ENCODE measurements at regions of chr1 and their contacts with region 1.

Region 1: GRCh38 chr1:16946646-16947045 is 24.9 kb downstream of the CROCC start:
- DNase-seq: no peak
- H3K4me3 ChIP-seq: no peak overlapping the region
- H3K27ac ChIP-seq: no peak overlapping the region
- H3K4me1 ChIP-seq: no peaks in the 10 kb centered on the region
- H3K27me3 ChIP-seq: no peaks in the 10 kb centered on the region
- CTCF ChIP-seq: no peak
- POLR2A ChIP-seq: no peak

Region 2: DNA sequence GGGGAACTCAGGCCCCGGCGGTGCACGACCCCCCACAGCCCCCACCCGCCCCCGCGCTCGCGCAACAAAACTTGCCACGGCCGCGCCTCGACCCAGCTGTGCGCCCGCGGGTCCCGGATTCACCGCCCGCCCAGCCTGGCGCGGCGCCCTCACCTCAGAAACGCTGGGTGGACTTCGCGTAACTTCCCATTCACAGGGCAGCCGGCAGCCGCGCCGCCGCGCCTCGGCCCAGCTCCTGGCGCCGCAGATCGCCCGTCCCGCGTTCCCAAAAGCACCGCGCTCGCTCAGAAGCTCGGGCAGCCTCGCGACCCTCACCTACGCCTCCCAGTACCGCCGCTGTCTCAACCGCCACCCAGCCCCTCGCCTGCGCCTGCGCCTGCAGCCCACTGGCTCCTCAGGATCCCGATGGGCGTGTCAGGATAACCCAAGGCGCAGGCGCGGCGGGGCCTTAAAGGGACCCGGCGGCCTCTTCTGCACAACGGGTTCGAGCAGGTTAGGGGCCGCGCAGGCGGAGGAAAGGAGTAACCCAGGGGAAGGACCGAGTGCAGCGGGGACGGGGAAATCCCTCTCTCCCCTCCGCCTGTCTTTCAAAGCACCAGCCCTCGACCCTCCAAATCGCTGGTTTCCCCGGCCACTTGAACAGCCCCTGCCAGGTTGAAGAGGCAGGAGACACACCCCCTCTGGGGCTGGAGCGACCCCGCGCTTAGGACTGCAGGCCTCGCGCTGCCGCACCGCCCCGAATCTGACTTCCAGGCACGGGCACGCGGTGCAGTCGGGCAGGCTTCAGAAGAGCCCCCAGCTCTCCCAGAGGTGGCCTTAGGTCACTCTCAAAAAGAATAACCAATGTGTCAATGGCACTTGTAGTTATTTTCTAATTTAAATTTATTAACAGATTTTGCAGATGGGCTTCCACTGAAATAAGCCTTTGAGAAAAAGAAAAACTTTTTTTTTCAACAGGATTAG is 333.2 kb before region 1 on chr1 and contains the start of gene NBPF1:
- CTCF ChIA-PET with region 1: interaction called, 47 read pairs
- POLR2A ChIA-PET with region 1: interaction called, 6 read pairs
- dilution Hi-C with region 1: no loop called
- intact Hi-C with region 1: no loop called
- DNase-seq: peak; percentile 100
- H3K4me3 ChIP-seq: peak within 1 kb of the TSS; percentile 48 to 66 (median 53)
- H3K27ac ChIP-seq: no peak within 1 kb of the TSS
- H3K4me1 ChIP-seq: peaks cover 12% of the 10 kb centered on the region
- H3K27me3 ChIP-seq: no peaks in the 10 kb centered on the region
- CTCF ChIP-seq: peak in 1 of 2 donors; percentile 1
- POLR2A ChIP-seq: peak; percentile 99
- total RNA-seq, gene NBPF1: 33.5 and 58.4 TPM in 2 replicates

Region 3: GRCh38 chr1:16625497-16626408 is 320.9 kb before region 1 on chr1:
- CTCF ChIA-PET with region 1: interaction called, 69 read pairs
- POLR2A ChIA-PET with region 1: no interaction called
- dilution Hi-C with region 1: no loop called
- intact Hi-C with region 1: loop called (anchors 1 kb)
- DNase-seq: no peak
- H3K4me3 ChIP-seq: no peak overlapping the region
- H3K27ac ChIP-seq: no peak overlapping the region
- H3K4me1 ChIP-seq: no peaks in the 10 kb centered on the region
- H3K27me3 ChIP-seq: no peaks in the 10 kb centered on the region
- CTCF ChIP-seq: no peak
- POLR2A ChIP-seq: no peak

Region 4: DNA sequence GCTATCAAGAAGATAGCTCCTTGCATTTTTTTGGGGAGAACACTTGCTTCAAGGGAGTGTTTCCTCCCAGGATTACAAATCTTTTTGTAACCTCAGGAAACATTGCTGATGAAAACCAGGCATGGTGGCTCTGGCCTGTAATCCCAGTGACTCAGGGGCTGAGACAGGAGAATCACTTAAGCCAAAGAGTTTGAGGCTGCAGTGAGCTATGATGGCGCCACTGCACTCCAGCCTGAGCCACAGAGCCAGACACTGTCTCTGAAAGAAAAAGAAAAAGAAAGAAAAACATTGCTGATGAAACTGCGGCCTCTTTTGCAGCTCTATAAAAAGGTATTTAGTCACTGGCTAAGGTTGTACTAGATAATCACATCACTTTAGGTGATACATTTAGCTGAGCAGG is 43.6 kb before region 1 on chr1:
- CTCF ChIA-PET with region 1: no interaction called
- POLR2A ChIA-PET with region 1: no interaction called
- dilution Hi-C with region 1: no loop called
- intact Hi-C with region 1: no loop called
- DNase-seq: no peak
- H3K4me3 ChIP-seq: no peak overlapping the region
- H3K27ac ChIP-seq: no peak overlapping the region
- H3K4me1 ChIP-seq: peaks cover 19% of the 10 kb centered on the region
- H3K27me3 ChIP-seq: no peaks in the 10 kb centered on the region
- CTCF ChIP-seq: no peak
- POLR2A ChIP-seq: no peak

Region 5: GRCh38 chr1:17011439-17012307 is 65.0 kb after region 1 on chr1 and contains the start of gene ATP13A2:
- CTCF ChIA-PET with region 1: interaction called, 6 read pairs
- POLR2A ChIA-PET with region 1: interaction called, 5 read pairs
- dilution Hi-C with region 1: no loop called
- intact Hi-C with region 1: loop called (anchors 2 kb)
- DNase-seq: peak; percentile 75
- H3K4me3 ChIP-seq: peak within 1 kb of the TSS; percentile 20 to 62 (median 59)
- H3K27ac ChIP-seq: no peak within 1 kb of the TSS
- H3K4me1 ChIP-seq: peaks cover 24% of the 10 kb centered on the region
- H3K27me3 ChIP-seq: no peaks in the 10 kb centered on the region
- CTCF ChIP-seq: no peak
- POLR2A ChIP-seq: no peak
- total RNA-seq, gene ATP13A2: 44.9 and 52.3 TPM in 2 replicates

Region 6: DNA sequence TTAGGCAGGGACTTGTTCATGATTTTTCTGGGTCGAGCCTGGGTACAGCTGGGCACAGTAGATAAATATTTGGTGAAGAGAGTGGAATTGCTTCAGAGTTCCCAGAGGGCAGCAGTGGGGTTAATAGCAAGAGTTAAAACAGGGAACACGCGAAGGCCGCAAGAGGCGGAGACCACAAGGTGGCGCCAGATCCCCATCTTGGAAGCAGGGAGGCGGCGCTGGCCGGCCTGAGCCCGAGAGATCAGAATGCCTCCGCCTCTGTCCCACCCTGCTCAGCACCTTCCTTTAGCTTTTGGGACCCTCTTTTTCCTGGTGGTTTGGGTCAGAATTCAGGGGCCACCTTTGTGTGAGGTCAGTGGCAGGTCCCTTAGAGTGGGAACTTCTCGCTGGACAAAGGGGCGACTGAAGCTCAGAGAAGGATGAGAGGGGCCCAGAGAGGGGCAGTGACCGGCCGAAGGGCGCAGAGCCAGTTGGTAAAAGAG is 179.2 kb after region 1 on chr1:
- CTCF ChIA-PET with region 1: no interaction called
- POLR2A ChIA-PET with region 1: no interaction called
- dilution Hi-C with region 1: no loop called
- intact Hi-C with region 1: loop called (anchors 2 kb)
- DNase-seq: peak; percentile 71
- H3K4me3 ChIP-seq: no peak overlapping the region
- H3K27ac ChIP-seq: no peak overlapping the region
- H3K4me1 ChIP-seq: peaks cover 30% of the 10 kb centered on the region
- H3K27me3 ChIP-seq: no peaks in the 10 kb centered on the region
- CTCF ChIP-seq: peak; percentile 93 to 96
- POLR2A ChIP-seq: no peak

Region 7: DNA sequence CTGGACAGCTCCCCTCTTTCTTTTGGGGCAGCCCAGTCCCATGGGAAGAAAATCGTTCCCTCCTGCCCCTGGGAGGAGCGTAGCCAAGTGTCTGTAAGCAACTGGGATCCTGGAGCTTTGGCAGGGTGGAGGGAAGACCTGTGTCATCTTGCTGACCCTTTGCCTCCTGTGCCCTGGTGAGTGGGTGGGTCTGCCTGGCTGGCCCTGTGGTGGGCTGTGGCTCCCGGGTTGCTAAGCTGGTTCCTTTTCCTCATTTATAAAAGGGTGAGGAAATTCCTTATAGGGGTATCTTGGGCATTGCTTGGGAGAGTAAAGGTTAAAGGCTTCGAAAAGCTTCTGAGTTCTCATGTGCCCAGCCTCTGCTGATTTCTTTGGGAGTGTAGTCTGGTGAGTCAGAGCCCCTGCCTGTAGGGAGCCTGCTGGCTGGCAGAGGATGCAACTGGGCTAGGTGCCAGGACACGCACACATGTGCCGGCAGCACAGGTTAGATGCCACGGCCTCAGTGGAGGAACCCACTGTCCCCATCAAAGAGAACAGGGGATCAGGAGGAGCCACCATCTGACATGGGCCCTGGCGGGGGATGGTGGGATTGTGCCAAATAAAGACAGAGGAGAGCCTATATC is 678.1 kb after region 1 on chr1:
- CTCF ChIA-PET with region 1: no interaction called
- POLR2A ChIA-PET with region 1: no interaction called
- dilution Hi-C with region 1: no loop called
- intact Hi-C with region 1: no loop called
- DNase-seq: no peak
- H3K4me3 ChIP-seq: no peak overlapping the region
- H3K27ac ChIP-seq: no peak overlapping the region
- H3K4me1 ChIP-seq: no peaks in the 10 kb centered on the region
- H3K27me3 ChIP-seq: no peaks in the 10 kb centered on the region
- CTCF ChIP-seq: no peak
- POLR2A ChIP-seq: no peak